Heart left ventricle (tissue), 16 donors: ENCODE measurements at regions of chr9 and their contacts with region 1.

Region 1: DNA sequence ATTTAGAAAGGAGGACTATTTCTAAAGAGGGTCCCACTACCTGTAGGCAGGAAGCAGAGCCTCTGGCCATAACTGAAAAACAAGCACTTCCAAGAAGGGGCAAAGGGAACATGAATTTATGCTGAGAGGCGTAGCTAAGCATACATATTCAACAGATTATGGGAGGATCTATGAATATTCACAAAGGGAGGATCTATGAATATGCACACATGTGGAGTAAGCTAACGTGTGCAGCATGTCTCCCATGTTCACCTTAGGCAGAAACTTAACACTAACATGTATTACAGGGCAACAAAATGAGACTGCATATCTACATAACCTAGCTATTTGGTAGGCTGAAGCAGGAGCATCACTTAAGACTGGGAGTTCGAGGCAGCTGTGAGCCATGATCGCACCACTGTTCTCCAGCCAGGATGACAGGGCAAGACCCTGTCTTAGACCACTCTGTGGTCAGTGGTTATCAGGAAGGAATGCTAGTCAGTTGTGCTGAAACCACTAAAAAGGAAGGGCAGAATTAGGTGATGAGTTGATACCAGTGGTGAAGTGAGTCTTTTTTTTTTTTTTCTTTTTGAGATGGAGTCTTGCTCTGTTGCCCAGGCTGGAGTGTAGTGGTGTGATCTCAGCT is 20.8 kb downstream of the FXN start:
- DNase-seq: no peak
- ATAC-seq: no peak
- H3K4me3 ChIP-seq: no peak overlapping the region
- H3K27ac ChIP-seq: no peak overlapping the region
- H3K4me1 ChIP-seq: peaks cover 0 to 12% (median 0%) of the 10 kb centered on the region in 12 donors
- H3K27me3 ChIP-seq: no peaks in the 10 kb centered on the region
- CTCF ChIP-seq: no peak
- POLR2A ChIP-seq: no peak

Region 2: DNA sequence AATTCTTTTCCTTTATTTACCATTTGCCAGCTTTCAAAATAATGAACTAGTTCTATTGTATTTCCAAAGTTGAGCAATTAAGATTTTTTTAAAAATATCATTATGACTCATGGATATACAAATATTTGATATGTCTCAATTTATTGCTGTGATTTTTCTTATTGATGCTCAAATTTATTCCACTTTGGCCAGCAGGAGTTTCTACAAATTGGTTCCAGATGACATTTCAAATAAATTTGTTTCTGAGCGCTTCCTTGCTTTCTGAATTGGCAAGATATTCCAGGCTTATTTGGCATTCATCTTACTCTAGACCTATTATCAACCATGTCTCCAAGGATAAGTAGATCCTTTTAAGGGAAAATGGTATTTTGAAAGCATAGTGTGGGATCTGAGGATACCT is 59.3 kb after region 1 on chr9:
- intact Hi-C with region 1: loop called in 4 of 10 experiments (anchors 5 to 10 kb)
- DNase-seq: no peak
- ATAC-seq: no peak
- H3K4me3 ChIP-seq: no peak overlapping the region
- H3K27ac ChIP-seq: no peak overlapping the region
- H3K4me1 ChIP-seq: peaks cover 0 to 4% (median under 1%) of the 10 kb centered on the region in 12 donors
- H3K27me3 ChIP-seq: no peaks in the 10 kb centered on the region
- CTCF ChIP-seq: no peak
- POLR2A ChIP-seq: no peak

Region 3: DNA sequence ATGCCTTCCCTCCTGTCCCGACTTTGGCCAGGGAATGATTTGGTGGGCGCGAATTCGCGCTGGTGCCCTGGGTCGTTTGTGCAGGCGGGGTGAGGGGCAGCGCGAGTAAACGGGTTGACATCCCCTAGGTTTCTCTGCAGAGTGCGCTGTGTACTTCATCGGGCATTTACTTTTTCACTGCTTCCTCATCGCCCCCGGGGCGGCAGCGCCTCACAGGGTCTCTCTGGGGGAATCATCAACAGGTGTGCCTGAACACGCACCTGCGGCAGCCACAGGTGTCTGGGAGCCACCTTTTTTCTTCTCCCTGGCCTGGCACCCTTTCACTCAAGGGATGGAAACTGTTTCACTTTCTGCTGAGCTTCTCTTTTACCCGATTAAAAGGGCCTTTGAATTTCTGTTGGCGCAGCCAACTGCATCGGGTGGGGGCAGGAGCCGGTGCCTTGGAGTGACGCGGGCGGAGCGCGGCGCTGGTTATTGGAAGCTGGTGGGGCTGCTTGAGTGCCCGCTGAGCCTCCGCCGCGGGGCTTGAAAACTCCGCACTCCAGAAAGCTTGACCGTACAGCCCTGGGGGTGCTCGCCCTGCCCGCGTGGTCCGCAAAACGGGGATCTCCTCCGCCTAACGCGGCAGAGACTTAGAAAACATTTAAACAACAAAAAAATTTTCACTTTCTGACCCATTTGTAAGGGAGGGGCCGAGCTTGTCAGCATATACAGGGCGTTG is 65.7 kb after region 1 on chr9:
- intact Hi-C with region 1: loop called in 4 of 10 experiments (anchors 5 to 10 kb)
- DNase-seq: peak; percentile 70 to 84 (median 78)
- ATAC-seq: peak; percentile 82 to 89 (median 84)
- H3K4me3 ChIP-seq: peak overlapping the region; percentile 63 to 87 (median 81)
- H3K27ac ChIP-seq: peak overlapping the region; percentile 70 to 96 (median 90)
- H3K4me1 ChIP-seq: peaks cover 0 to 17% (median 9%) of the 10 kb centered on the region in 12 donors
- H3K27me3 ChIP-seq: no peaks in the 10 kb centered on the region
- CTCF ChIP-seq: peak in 3 of 12 donors; percentile 1 to 32 (median 21)
- POLR2A ChIP-seq: no peak

Region 4: DNA sequence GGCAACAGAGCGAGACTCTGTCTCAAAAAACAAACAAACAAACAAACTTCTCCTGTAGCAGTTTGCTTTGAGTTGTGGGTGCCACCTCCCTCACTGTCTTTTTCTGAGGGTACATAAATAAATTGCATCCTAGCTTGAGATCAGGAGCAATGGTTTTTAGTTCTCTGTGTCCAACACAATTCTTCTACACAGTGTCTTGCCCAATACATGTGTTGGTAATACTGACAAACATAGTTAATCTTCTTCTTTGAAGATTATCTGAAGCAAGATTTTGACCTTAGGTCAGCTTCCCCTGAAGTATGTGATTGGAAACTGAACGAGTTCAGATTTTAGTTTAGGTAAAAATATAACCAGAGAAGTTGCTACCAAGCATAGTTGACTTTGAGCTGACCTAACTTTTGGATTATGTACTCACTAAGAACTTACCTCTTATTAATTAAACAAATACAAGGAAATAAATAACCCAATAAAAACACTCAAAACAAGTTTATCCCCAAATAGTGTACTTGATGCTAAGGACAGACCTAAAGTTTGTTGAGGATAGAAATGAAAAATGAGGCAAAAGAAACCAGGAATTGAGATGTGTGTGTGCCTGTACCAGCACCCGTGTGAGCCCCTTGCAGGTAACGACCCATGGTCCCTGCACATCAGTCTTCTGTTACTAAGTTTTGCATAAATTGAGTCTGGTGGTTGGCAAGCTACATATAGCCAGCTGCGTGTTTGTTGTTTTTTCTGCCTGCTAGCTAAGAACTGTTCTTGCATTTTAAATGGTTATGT is 134.0 kb after region 1 on chr9:
- intact Hi-C with region 1: loop called (anchors 1 to 5 kb)
- DNase-seq: no peak
- ATAC-seq: no peak
- H3K4me3 ChIP-seq: no peak overlapping the region
- H3K27ac ChIP-seq: peak overlapping the region in 5 of 12 donors; percentile 9 to 53 (median 29)
- H3K4me1 ChIP-seq: peaks cover 15 to 90% (median 58%) of the 10 kb centered on the region in 12 donors
- H3K27me3 ChIP-seq: no peaks in the 10 kb centered on the region
- CTCF ChIP-seq: no peak
- POLR2A ChIP-seq: no peak

Region 5: DNA sequence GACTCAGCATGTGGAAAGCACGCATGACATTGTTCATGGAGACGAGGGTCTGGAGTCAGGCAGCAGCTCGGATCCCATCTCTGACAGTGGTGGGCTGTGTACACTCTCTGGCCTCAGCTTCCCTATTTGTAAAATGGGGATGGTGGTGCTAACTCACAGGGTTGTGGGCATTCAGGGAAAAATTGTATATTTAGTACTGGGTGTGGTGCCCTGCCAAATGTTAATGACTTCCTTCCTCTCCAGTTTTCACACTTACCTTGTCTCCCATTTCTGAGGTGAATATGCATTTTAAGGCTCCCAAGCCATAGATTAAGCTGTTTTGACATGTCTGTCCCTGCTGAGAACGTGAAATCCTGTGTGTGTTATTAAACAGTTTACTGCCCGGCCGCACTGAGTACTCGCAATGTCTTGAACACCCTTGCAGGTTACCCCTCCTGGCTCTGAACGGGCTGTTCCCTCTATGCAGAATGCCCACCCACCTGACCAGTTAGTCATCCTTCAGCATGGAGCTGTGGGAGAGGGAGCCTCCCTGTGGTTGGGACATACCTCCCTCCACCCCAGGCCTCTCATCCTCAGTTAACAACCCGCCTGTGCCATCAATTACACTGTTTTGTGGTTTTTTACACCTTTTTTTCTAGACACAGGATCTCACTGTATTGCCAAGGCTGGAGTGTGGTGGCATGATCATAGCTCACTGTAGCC is 143.6 kb after region 1 on chr9:
- intact Hi-C with region 1: loop called in 3 of 10 experiments (anchors 1 to 2 kb)
- DNase-seq: peak in 1 of 5 donors; percentile 50
- ATAC-seq: peak in 3 of 4 donors; percentile 27 to 72 (median 54)
- H3K4me3 ChIP-seq: no peak overlapping the region
- H3K27ac ChIP-seq: peak overlapping the region in 1 of 12 donors; percentile 62
- H3K4me1 ChIP-seq: peaks cover 0 to 58% (median 32%) of the 10 kb centered on the region in 12 donors
- H3K27me3 ChIP-seq: no peaks in the 10 kb centered on the region
- CTCF ChIP-seq: peak in 1 of 12 donors; percentile 9
- POLR2A ChIP-seq: no peak

Region 6: GRCh38 chr9:69253057-69253456 is 196.8 kb after region 1 on chr9:
- intact Hi-C with region 1: loop called in 1 of 10 experiments (anchors 10 kb)
- DNase-seq: no peak
- ATAC-seq: peak in 3 of 4 donors; percentile 18 to 32 (median 30)
- H3K4me3 ChIP-seq: no peak overlapping the region
- H3K27ac ChIP-seq: peak overlapping the region in 9 of 12 donors; percentile 3 to 59 (median 47)
- H3K4me1 ChIP-seq: peaks cover 0 to 18% (median 6%) of the 10 kb centered on the region in 12 donors
- H3K27me3 ChIP-seq: no peaks in the 10 kb centered on the region
- CTCF ChIP-seq: no peak
- POLR2A ChIP-seq: no peak

Region 7: GRCh38 chr9:69549310-69550202 is 493.3 kb after region 1 on chr9:
- intact Hi-C with region 1: loop called in 1 of 10 experiments (anchors 10 kb)
- DNase-seq: no peak
- ATAC-seq: peak in 3 of 4 donors; percentile 39 to 70 (median 44)
- H3K4me3 ChIP-seq: no peak overlapping the region
- H3K27ac ChIP-seq: no peak overlapping the region
- H3K4me1 ChIP-seq: peaks cover 0 to 7% (median 2%) of the 10 kb centered on the region in 12 donors
- H3K27me3 ChIP-seq: no peaks in the 10 kb centered on the region
- CTCF ChIP-seq: peak; percentile 74 to 93 (median 86)
- POLR2A ChIP-seq: no peak